Left colon (tissue), 2 donors: ENCODE measurements at regions of chr9 and their contacts with region 1.

Region 1: GRCh38 chr9:94783102-94783664 is 56.7 kb downstream of the AOPEP start:
- DNase-seq: peak; percentile 79
- ATAC-seq: peak; percentile 97

Region 2: GRCh38 chr9:94860968-94861871 is 78.0 kb after region 1 on chr9:
- intact Hi-C with region 1: no loop called
- DNase-seq: peak; percentile 43 to 50
- ATAC-seq: peak; percentile 41

Region 3: GRCh38 chr9:94937214-94937903 is 154.2 kb after region 1 on chr9:
- intact Hi-C with region 1: no loop called
- DNase-seq: no peak
- ATAC-seq: no peak

Region 4: GRCh38 chr9:95004411-95005277 is 221.5 kb after region 1 on chr9:
- intact Hi-C with region 1: loop called in 1 of 2 experiments (anchors 5 kb)
- DNase-seq: peak; percentile 67 to 80
- ATAC-seq: peak; percentile 75

Region 5: GRCh38 chr9:95131023-95131943 is 348.1 kb after region 1 on chr9:
- intact Hi-C with region 1: loop called in 1 of 2 experiments (anchors 5 kb)
- DNase-seq: peak; percentile 60 to 71
- ATAC-seq: peak; percentile 42